ENCODE measurements at regions of chr15 and their contacts with region 1.

Region 1: GRCh38 chr15:44195151-44195740 is at the start of gene FRMD5:
- DNase-seq: peak; percentile 96 to 97
- H3K4me3 ChIP-seq: peak within 1 kb of the TSS; percentile 81
- H3K4me3 Mint-ChIP-seq: peak within 1 kb of the TSS; percentile 93
- H3K27ac Mint-ChIP-seq: peak within 1 kb of the TSS; percentile 89
- H3K4me1 ChIP-seq: peaks cover 12% of the 10 kb centered on the region
- H3K4me1 Mint-ChIP-seq: peaks cover 9% of the 10 kb centered on the region
- H3K27me3 ChIP-seq: no peaks in the 10 kb centered on the region
- H3K27me3 Mint-ChIP-seq: no peaks in the 10 kb centered on the region
- CTCF ChIP-seq: peak; percentile 18 to 44
- total RNA-seq, gene FRMD5: 17.4 and 19.5 TPM in 2 replicates

Region 2: DNA sequence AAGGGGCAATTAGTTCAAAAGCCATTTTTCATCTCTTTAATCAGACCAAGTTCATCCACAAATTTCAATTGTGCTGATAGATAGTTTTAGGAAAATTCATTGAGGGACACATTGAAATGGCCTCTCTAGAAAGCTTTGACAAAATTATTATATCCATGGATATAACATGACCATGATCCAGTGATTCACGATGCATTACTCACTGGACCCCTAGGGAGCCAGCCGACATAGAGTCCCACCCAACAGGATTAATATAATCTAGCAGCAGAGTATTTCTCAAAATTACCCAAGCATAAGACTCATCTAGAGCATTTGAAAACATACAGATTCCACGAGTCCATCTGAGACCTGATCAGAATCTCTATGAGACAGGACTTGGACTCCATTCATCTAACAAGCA is 100.5 kb before region 1 on chr15:
- CTCF ChIA-PET with region 1: no interaction called
- POLR2A ChIA-PET with region 1: no interaction called
- intact Hi-C with region 1: loop called (anchors 1 kb)
- DNase-seq: no peak
- H3K4me3 ChIP-seq: no peak overlapping the region
- H3K4me3 Mint-ChIP-seq: no peak overlapping the region
- H3K27ac Mint-ChIP-seq: no peak overlapping the region
- H3K4me1 ChIP-seq: peaks cover 23% of the 10 kb centered on the region; the same call in 1 of the 2 replicates
- H3K4me1 Mint-ChIP-seq: peaks cover 26% of the 10 kb centered on the region
- H3K27me3 ChIP-seq: no peaks in the 10 kb centered on the region
- H3K27me3 Mint-ChIP-seq: no peaks in the 10 kb centered on the region
- CTCF ChIP-seq: no peak

Measured in Caco-2 (cell line).